Endothelial cell of umbilical vein (primary cell): ENCODE measurements at regions of chr19 and their contacts with region 1.

Region 1: DNA sequence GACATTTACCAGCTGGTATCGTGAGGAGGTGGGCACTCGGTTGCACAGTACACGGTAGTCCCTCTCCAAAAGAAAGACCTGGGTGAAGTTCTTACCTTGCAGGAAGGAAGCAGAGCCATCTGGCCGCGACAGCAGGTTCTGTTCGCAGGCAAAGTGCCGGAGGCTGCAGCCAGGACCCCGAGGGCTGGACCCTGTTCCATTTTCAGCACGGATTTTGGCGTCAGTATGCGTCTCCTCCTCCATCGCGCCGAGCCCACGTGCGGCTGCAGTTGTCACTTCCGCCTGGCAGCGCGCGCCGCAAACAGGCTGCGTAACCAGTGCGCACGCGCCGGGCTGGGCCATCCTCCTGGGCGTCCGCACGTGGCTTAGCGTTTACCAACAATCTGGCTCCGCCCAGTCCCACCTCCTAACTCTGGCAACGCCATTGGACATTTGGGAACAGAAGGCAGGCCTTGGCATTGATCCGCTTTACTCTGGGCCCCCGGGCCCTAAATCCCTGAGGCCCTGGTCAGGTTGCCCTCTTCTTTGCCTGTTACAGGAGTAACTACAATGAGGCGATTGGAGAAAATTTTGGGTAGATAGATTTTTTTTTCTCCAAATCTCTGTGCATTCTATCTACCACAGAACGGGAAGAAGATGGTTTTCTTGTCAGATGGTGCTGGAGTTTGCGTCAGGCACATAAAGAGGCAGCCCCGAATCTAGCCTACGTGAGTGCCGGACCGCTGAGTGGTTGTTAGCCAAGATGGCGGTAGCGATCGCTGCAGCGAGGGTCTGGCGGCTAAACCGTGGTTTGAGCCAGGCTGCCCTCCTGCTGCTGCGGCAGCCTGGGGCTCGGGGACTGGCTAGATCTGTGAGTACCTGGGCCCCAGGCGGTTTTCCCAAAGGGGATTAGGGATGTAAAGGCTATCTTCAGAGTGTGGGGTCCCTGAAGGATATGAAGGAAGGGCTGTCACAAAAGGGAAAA is at the starts of genes BCKDHA and EXOSC5:
- DNase-seq: peak; percentile 100
- H3K4me3 ChIP-seq: peak within 1 kb of the TSS; percentile 79 to 95 (median 81)
- H3K27ac ChIP-seq: peak within 1 kb of the TSS; percentile 93
- H3K4me1 ChIP-seq: peaks cover 29% of the 10 kb centered on the region
- H3K27me3 ChIP-seq: no peaks in the 10 kb centered on the region
- CTCF ChIP-seq: no peak
- POLR2A ChIP-seq: peak; percentile 43
- total RNA-seq, gene BCKDHA: 12.9 and 16.5 TPM in 2 replicates
- total RNA-seq, gene EXOSC5: 13.8 and 14.0 TPM in 2 replicates

Region 2: DNA sequence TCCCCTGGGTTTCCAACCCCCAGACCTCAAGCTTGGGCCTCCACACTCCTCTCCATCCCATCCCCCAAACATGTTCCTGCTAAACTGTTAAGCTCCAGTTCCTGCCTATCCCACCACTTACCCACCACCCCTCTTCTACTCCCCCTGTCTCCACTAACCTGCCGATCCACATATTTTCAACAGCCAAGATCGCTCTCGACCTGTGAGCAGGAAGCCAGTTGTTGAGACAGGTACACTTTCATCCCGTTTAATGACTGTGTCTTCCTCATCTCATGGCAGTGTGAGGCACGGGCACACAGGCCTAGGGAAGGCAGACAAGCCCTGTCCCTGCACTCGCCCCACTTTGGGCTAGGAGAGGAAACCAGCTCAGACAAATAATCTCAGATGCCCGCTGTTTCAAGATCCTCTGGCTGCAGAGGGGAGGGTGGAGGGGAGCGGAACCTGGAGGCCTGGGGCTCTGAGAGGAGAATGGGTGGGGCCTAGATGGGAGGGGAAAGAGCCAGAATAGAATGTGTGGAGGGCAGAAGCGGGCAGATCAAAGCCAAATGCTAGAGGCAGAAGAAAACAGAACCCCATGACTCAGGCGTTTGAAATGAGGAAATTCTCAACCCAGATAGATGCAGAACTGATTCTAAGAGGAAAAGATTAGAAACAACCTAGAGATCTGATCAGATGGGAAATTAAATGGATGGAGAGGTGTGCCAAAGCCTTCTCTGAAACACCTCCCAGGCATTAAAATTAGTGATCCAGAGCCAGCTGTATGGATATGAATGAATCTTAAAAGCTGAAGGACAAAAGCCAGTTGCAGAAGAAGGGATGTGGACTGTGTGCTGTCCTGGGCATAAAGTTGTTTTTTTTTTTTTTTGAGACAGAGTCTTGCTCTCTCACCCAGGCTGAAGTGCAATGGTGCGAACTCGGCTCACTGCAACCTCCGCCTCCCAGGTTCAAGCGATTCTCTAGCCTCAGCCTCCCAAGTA is 221.3 kb before region 1 on chr19:
- CTCF ChIA-PET with region 1: no interaction called
- POLR2A ChIA-PET with region 1: no interaction called
- dilution Hi-C with region 1: no loop called
- intact Hi-C with region 1: no loop called
- DNase-seq: no peak
- H3K4me3 ChIP-seq: no peak overlapping the region
- H3K27ac ChIP-seq: no peak overlapping the region
- H3K4me1 ChIP-seq: peaks cover 5% of the 10 kb centered on the region
- H3K27me3 ChIP-seq: no peaks in the 10 kb centered on the region
- CTCF ChIP-seq: no peak
- POLR2A ChIP-seq: no peak

Region 3: DNA sequence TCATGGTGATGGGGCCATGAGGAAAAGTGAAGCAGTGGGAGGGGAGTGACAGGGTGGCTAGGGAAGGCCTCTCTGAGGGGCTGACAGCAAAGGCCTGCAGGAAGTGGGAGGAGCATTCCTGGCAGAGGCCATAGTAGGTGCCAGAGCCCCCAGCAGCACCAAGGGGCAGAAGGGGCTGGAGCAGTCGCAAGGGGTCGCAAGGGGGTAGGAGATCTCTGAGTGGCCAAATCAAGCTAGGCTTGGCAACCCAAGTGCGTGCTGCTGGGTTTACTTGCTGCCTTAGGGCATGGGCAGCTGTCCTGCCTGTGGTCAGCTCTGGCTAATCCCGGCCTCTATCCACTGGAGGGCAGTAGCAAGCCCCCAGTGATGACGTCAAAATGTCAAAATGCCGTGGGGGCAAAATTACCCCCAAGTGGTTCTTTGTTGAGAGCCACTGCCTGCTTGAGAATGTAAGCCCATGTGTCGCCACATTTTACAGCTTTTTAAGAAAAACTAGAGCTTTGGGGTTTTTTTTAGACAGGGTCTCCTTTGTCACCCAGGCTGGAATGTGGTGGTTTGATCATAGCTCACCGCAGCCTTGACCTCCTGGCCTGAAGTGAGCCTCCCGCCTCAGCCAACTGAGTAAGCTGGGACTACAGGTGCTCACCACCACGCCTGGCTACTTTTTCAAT is 75.6 kb before region 1 on chr19:
- CTCF ChIA-PET with region 1: interaction called, 4 read pairs
- POLR2A ChIA-PET with region 1: no interaction called
- dilution Hi-C with region 1: no loop called
- intact Hi-C with region 1: loop called (anchors 2 kb)
- DNase-seq: peak; percentile 76
- H3K4me3 ChIP-seq: no peak overlapping the region
- H3K27ac ChIP-seq: peak overlapping the region; percentile 100
- H3K4me1 ChIP-seq: peaks cover 46% of the 10 kb centered on the region
- H3K27me3 ChIP-seq: no peaks in the 10 kb centered on the region
- CTCF ChIP-seq: peak; percentile 83 to 89
- POLR2A ChIP-seq: peak; percentile 38

Region 4: DNA sequence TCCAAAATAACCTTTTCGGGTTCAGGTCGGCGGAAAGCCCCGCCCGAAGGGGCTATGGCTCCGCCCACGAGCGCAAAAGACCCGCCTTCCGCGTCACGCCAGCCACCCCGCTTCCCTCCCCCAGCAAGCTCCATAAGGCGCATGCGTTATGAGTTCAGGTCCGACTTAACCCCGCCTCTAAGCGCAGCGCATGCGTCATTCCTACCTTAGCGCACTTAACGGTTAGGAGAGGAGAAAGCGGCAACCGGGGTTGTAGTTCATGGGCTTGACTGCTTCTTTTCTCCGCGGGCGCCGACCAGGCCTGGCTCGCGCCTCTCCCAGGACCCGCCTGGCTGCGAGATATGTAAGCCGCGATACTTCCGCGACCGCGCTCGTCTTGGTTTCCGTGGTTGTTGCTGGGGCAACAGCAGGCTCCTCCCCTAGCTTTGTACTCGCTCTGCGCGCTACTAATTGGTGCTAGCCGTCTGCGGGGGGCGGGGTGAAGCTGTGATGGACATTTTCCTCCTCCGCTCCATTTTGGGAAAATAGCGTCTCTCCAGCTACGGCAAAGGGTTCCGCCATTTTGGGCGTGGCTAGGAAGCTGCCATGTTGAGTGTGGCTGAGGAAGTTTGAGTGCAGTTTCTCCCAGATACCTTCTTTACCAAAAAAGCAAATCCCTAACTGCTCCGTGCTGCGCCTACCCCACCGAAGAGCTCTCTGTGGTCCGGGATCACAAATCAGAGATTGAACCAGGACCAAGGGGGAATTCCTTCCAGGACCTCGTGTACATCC is 33.4 kb before region 1 on chr19 and contains the start of gene B9D2:
- CTCF ChIA-PET with region 1: interaction called, 4 read pairs
- POLR2A ChIA-PET with region 1: no interaction called
- dilution Hi-C with region 1: no loop called
- intact Hi-C with region 1: loop called (anchors 1 kb)
- DNase-seq: peak; percentile 99
- H3K4me3 ChIP-seq: peak within 1 kb of the TSS; percentile 40 to 86 (median 60)
- H3K27ac ChIP-seq: peak within 1 kb of the TSS; percentile 88
- H3K4me1 ChIP-seq: peaks cover 20% of the 10 kb centered on the region
- H3K27me3 ChIP-seq: no peaks in the 10 kb centered on the region
- CTCF ChIP-seq: no peak
- POLR2A ChIP-seq: peak; percentile 91
- total RNA-seq, gene B9D2: 12.2 and 13.6 TPM in 2 replicates

Region 5: GRCh38 chr19:41377977-41378709 is 19.2 kb before region 1 on chr19:
- CTCF ChIA-PET with region 1: no interaction called
- POLR2A ChIA-PET with region 1: no interaction called
- dilution Hi-C with region 1: no loop called
- intact Hi-C with region 1: loop called (anchors 2 kb)
- DNase-seq: no peak
- H3K4me3 ChIP-seq: no peak overlapping the region
- H3K27ac ChIP-seq: no peak overlapping the region
- H3K4me1 ChIP-seq: peaks cover 8% of the 10 kb centered on the region
- H3K27me3 ChIP-seq: no peaks in the 10 kb centered on the region
- CTCF ChIP-seq: peak in 1 of 2 donors; percentile 2
- POLR2A ChIP-seq: no peak

Region 6: GRCh38 chr19:41409288-41409687 is 11.9 kb after region 1 on chr19:
- CTCF ChIA-PET with region 1: no interaction called
- POLR2A ChIA-PET with region 1: interaction called, 6 read pairs
- dilution Hi-C with region 1: no loop called
- intact Hi-C with region 1: loop called (anchors 1 kb)
- DNase-seq: peak; percentile 15
- H3K4me3 ChIP-seq: no peak overlapping the region
- H3K27ac ChIP-seq: no peak overlapping the region
- H3K4me1 ChIP-seq: peaks cover 12% of the 10 kb centered on the region
- H3K27me3 ChIP-seq: no peaks in the 10 kb centered on the region
- CTCF ChIP-seq: no peak
- POLR2A ChIP-seq: no peak

Region 7: GRCh38 chr19:41426952-41427646 is 29.7 kb after region 1 on chr19 and contains the start of gene B3GNT8:
- CTCF ChIA-PET with region 1: interaction called, 3 read pairs
- POLR2A ChIA-PET with region 1: interaction called, 3 read pairs
- dilution Hi-C with region 1: no loop called
- intact Hi-C with region 1: loop called (anchors 1 kb)
- DNase-seq: peak; percentile 60
- H3K4me3 ChIP-seq: peak within 1 kb of the TSS; percentile 41 to 49 (median 41)
- H3K27ac ChIP-seq: peak within 1 kb of the TSS; percentile 62
- H3K4me1 ChIP-seq: peaks cover 25% of the 10 kb centered on the region
- H3K27me3 ChIP-seq: no peaks in the 10 kb centered on the region
- CTCF ChIP-seq: no peak
- POLR2A ChIP-seq: peak; percentile 51
- total RNA-seq, gene B3GNT8: 6.5 and 7.6 TPM in 2 replicates

Region 8: DNA sequence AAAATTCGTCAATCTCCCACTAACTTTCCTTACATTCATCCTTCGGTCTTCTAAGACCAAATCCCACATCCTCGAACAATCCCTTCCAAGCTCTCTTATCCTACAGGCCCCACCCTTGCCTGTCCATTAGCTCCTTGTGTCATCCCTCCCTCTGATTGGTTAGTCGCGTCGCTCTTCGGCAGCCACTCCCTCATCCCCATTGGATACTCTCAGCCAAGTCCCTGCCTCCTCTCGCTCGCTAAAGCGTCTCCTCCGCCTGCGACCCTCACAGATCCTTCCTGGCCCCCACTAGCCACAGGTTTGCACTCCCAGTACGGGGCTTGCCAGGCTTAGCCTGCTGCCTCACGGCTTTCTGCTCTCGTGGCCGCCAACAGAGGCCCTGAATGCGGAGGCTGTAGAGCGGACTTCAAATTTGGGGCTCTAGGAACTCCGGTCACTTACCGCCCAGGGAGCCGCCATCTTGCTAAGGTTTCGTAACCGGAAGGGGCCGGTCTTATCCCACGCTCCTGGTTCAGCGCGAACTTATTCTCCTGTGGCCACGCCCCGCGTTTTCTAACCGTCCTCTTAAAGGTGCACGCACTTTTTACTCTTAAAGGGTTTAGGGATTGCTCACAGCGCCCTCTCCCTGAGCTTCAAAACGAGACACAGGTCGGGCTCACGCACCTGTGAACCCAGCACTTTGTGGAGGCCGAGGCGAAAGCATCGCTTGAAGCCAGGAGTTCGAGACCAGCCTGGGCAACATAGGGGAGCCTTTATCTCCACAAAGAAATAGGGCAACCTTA is 42.3 kb after region 1 on chr19 and contains the start of gene DMAC2:
- CTCF ChIA-PET with region 1: interaction called, 4 read pairs
- POLR2A ChIA-PET with region 1: no interaction called
- dilution Hi-C with region 1: no loop called
- intact Hi-C with region 1: loop called (anchors 1 kb)
- DNase-seq: peak; percentile 98
- H3K4me3 ChIP-seq: peak within 1 kb of the TSS; percentile 66 to 87 (median 76)
- H3K27ac ChIP-seq: peak within 1 kb of the TSS; percentile 89
- H3K4me1 ChIP-seq: peaks cover 6% of the 10 kb centered on the region
- H3K27me3 ChIP-seq: peaks cover 0 to 2% of the 10 kb centered on the region in 2 experiments
- CTCF ChIP-seq: peak; percentile 37 to 52
- POLR2A ChIP-seq: peak; percentile 79
- total RNA-seq, gene DMAC2: 63.2 and 65.4 TPM in 2 replicates